OCI-LY7 (cell line): ENCODE measurements at regions of chr5 and their contacts with region 1.

Region 1: DNA sequence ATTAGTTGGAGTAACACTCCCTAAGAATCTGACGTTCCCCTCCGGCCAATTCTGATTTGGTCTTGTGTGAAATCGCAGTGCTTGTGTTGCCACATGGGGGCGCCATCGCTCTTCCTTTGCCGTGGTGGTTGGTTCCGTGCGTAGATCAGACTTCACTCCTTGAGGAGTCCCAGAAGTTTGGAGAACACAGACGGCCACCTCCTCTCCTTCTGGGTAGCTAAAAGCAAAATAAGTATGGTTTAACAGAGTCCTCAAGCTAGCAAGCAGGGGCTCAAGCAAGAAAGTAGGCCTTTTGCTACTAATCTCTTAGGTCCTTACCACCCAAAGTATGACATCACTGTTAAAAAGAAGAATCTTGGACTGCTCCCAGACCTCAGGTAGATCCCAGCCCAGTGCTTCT is 59.5 kb downstream of the HSPA4 start:
- DNase-seq: peak; percentile 87
- H3K4me3 ChIP-seq: no peak overlapping the region
- H3K27ac ChIP-seq: no peak overlapping the region
- H3K4me1 ChIP-seq: peaks cover 61% of the 10 kb centered on the region
- CTCF ChIP-seq: peak; percentile 99

Region 2: DNA sequence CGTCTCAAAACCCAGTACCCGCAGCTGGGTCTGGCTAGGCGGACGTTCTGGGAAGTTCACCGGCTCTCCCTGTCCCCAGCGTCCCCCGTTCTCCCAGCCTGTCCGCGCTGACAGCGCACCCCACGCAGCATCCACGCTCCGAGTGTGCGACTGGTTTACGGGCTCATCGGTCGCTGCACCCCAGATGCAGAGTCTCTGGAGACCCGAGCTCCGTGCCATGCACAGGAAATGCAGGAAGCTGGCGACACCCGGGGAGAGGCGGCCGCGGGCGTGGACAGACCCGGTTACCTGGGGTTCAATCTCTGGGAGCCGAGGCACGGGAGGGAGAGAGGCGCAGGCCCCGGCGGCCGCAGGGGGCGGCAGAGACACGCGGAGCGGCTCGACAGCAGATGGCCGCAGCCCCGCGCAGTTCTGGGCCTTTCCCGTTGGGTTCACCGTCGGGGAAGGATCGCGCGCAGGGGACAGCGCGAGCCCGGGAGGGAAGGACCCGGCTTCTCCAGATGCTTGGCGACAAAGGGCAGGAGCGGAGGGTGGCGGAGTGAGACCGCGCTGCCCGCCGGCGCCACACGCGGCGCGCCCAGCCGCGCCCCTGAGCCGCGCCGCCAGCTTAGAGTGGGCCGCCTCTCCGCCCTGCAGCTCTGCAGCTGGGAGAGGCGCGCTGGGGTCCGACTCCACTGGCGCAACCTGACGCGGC is 281.4 kb before region 1 on chr5:
- CTCF ChIA-PET with region 1: interaction called, 9 read pairs
- POLR2A ChIA-PET with region 1: no interaction called
- intact Hi-C with region 1: loop called (anchors 1 kb)
- DNase-seq: peak; percentile 73
- H3K4me3 ChIP-seq: peak overlapping the region; percentile 63
- H3K27ac ChIP-seq: no peak overlapping the region
- H3K4me1 ChIP-seq: peaks cover 5% of the 10 kb centered on the region
- CTCF ChIP-seq: peak; percentile 81

Region 3: GRCh38 chr5:133032852-133033742 is 78.2 kb before region 1 on chr5:
- CTCF ChIA-PET with region 1: no interaction called
- POLR2A ChIA-PET with region 1: no interaction called
- intact Hi-C with region 1: loop called (anchors 5 kb)
- DNase-seq: peak; percentile 90
- H3K4me3 ChIP-seq: peak overlapping the region; percentile 44
- H3K27ac ChIP-seq: peak overlapping the region; percentile 97
- H3K4me1 ChIP-seq: peaks cover 72% of the 10 kb centered on the region
- CTCF ChIP-seq: no peak

Region 4: DNA sequence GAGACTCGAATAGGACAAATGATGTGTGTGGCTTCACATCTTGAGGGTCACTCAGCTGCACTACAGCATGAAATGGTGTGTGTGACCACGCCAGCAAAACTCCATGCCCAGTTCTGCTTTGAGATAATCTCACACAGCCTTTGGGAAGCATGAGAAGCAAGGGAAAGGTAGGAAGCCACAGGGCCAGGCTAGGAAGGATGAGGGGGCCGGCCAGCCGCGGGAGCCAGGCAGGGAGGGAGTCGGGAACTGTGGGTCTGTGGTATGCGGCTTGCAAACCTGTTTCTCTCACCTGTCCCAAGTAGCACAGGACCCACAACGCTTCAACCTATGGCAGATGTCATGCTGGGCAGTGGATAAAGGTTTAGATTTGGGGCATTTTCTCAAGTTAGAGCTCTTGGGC is 82.5 kb after region 1 on chr5:
- CTCF ChIA-PET with region 1: no interaction called
- POLR2A ChIA-PET with region 1: no interaction called
- intact Hi-C with region 1: no loop called
- DNase-seq: no peak
- H3K4me3 ChIP-seq: no peak overlapping the region
- H3K27ac ChIP-seq: no peak overlapping the region
- H3K4me1 ChIP-seq: no peaks in the 10 kb centered on the region
- CTCF ChIP-seq: no peak

Region 5: DNA sequence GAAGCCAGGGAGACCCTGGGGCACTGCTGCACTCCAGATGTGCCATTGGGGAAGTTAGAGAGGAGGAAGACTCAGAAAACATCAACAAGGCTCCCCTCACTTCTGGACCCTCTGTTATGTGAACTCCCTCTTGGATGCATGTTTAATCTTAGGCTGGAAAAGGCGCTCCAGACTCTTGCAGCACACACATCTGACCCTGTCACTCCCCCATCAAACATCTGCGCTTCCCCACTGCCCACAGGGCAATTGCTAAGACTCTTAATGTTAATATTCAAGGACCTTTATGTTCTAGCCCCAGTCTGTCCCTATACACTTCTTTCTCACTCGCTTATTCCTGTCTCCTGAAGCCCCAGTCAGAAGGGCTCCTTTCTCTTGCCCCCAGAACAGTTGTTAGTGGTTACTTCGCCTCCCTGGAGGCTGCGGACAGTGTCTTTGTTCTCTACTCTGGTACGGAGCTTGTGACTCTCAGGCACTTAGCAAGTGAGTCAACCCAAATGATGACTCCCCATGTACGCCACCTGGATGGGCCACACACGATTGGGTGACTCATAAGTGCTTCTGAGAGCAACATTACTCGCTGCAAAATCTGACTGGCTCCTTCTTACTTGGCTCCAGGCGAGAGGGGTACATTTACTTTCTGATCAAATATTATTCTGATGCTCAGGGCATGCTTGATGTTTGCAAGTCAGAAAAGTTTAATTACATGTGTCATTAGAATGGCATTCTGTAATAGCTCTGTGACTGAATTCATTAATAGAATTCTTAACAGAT is 134.1 kb after region 1 on chr5:
- CTCF ChIA-PET with region 1: interaction called, 3 read pairs
- POLR2A ChIA-PET with region 1: interaction called, 3 read pairs
- intact Hi-C with region 1: loop called (anchors 2 kb)
- DNase-seq: no peak
- H3K4me3 ChIP-seq: no peak overlapping the region
- H3K27ac ChIP-seq: no peak overlapping the region
- H3K4me1 ChIP-seq: peaks cover 8% of the 10 kb centered on the region
- CTCF ChIP-seq: no peak

Region 6: DNA sequence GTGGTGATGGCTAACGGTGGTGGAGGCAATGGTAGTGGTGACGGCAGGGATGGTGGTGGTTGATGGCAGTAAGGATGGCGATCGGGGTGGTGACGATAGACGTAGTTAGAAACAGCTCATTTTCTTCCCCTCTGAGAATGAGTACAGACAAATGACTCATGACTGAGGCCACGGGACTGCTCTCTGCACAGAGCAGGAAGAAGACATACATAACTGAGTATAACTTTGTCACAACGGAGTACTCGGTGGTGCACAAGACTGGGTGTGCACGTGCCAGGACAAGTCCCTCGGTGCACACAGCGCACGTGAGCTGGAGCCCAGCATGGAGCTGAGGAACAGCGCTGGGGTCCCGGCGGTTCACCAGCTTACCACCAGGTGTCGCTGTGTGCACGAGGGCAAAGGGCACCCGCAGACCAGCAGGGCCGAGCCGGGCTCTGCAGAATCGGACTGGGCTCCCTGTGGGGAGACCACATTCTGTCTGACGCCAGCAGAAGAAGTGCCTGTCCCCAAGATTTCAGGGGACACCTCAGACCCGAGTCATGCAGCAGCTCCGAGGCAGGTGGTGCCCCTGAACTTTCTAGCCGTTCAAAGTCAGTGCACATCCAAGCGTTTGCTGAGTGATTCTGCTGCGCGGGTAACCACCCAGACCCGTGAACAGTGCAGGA is 312.5 kb after region 1 on chr5:
- CTCF ChIA-PET with region 1: interaction called, 3 read pairs
- POLR2A ChIA-PET with region 1: interaction called, 3 read pairs
- intact Hi-C with region 1: loop called (anchors 2 kb)
- DNase-seq: peak; percentile 56
- H3K4me3 ChIP-seq: no peak overlapping the region
- H3K27ac ChIP-seq: no peak overlapping the region
- H3K4me1 ChIP-seq: peaks cover 6% of the 10 kb centered on the region
- CTCF ChIP-seq: peak; percentile 88

Region 7: GRCh38 chr5:133868946-133869518 is 757.7 kb after region 1 on chr5:
- CTCF ChIA-PET with region 1: no interaction called
- POLR2A ChIA-PET with region 1: no interaction called
- intact Hi-C with region 1: loop called (anchors 5 kb)
- DNase-seq: peak; percentile 77
- H3K4me3 ChIP-seq: no peak overlapping the region
- H3K27ac ChIP-seq: no peak overlapping the region
- H3K4me1 ChIP-seq: no peaks in the 10 kb centered on the region
- CTCF ChIP-seq: peak; percentile 99